ENCODE measurements at regions of chr5 and their contacts with region 1.

Region 1: DNA sequence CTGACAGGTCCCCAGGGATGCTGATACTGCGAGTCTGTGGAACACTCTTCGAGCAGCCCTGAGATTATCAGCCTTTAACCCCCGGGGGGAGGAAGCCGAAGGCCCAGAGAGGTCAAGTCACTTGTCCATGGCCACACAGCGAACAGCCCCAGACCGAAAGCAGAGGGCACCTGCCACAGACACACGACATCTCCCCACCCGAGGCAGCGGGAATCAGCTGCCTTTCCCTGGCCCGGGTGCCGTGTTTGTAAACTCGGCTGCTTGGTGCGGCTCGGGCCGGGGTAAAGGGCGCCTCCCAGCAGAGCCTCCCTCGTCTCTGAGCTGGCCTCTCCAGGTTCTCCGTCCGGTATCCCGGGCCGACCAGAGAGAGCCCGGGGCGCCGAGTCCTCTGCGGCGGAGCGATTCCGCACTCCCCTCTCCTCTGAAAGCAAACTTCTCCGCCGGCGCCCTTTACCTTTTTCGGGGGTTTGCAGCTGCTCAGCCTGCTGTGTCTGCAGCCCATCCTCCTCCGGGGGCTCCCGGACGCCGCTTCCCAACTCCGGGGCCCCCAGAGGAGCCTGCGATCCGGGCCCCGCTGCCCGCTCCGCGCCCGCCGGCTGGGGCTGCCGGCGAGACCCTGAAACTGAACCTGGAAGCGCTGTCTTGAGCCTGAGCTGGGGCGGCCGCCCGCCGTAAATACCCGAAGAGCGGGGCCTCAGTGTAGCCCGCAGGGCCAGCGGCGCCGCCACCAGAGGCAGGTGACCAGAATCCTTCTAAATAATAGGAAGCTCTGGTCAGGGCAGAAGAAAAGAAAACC is at the start of gene CCDC69:
- DNase-seq: peak in 1 of 2 experiments; percentile 65
- H3K4me3 ChIP-seq: peak within 1 kb of the TSS; percentile 71
- H3K27ac ChIP-seq: no peak within 1 kb of the TSS
- H3K4me1 ChIP-seq: no peaks in the 10 kb centered on the region
- H3K27me3 ChIP-seq: no peaks in the 10 kb centered on the region
- CTCF ChIP-seq: no peak
- total RNA-seq, gene CCDC69: 0.35 and 0.50 TPM in 2 replicates

Region 2: GRCh38 chr5:151134238-151134637 is 89.4 kb before region 1 on chr5:
- CTCF ChIA-PET with region 1: no interaction called
- POLR2A ChIA-PET with region 1: no interaction called
- intact Hi-C with region 1: loop called (anchors 5 kb)
- DNase-seq: peak; percentile 17 to 41
- H3K4me3 ChIP-seq: no peak overlapping the region
- H3K27ac ChIP-seq: no peak overlapping the region
- H3K4me1 ChIP-seq: no peaks in the 10 kb centered on the region
- H3K27me3 ChIP-seq: no peaks in the 10 kb centered on the region
- CTCF ChIP-seq: no peak

Measured in PC-9 (cell line).